ENCODE measurements at regions of chr20 and their contacts with region 1.

Region 1: DNA sequence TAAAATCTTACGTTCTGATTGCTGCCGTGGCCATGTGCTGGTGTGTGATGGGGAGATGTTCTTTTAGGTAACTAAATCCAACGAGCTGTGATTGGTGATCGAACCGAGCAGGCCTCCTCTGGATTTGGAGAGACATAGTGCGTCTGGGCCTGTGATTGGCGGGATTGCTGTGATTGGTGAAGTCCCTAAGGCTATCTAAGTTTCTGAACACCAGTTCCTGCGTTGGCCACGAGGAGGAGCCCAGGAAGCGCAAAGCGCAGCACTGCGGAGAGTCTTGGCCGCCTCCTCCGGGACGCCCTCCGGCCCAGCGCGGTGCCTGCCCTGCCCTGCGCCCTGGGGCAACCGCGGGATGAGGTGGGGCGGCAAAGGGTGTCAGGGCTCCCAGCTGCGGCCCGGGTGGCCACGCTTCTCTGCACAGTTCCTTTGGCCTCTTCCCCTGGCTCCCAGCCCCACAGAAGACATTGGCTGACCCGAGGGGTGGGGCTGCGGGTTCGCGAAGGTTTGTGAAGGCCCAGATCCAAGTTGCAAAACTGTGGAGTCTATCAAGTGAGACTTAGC is 33.0 kb downstream of the HNF4A start:
- DNase-seq: peak; percentile 87
- H3K4me3 Mint-ChIP-seq: no peak overlapping the region
- H3K27ac Mint-ChIP-seq: no peak overlapping the region
- H3K4me1 Mint-ChIP-seq: peaks cover 14% of the 10 kb centered on the region
- H3K27me3 Mint-ChIP-seq: no peaks in the 10 kb centered on the region
- CTCF ChIP-seq: peak; percentile 96

Region 2: DNA sequence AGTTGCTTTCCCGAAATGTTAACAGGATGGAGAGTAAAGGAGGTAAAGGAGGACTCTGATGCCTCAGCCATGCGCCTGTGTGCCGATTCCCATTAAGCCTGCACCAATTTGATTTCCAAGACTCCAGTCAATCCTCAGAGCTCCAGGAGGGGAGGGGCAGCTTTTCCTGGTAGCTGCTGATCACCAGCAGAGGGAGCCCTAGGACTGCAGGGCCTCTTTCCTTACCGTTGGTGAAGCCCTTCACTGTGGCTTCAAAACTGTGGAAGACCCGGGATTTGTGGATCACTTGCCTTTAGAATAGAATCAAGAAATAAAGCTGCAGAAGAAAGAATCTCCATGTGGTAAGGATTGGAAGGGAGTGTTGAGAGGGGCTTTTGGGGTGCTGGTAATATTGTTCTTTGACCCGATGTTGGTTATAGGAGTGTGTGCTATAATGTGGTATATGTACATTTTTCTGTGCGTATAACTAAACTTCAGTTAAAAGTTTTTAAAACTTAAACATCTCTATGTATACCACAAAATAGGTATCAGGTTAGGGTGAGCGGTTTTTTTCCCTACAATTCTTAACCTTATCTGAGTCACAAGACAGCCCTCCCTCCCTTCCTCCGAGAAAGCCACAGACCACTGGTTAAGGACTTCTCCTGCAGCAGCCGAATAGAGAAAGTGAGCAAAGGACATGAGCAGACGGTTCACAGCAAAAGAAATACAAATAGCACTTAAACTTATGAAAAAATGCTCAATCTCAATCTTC is 171.0 kb before region 1 on chr20:
- CTCF ChIA-PET with region 1: interaction called, 51 read pairs
- intact Hi-C with region 1: loop called (anchors 1 kb)
- DNase-seq: peak; percentile 91
- H3K4me3 Mint-ChIP-seq: no peak overlapping the region
- H3K27ac Mint-ChIP-seq: no peak overlapping the region
- H3K4me1 Mint-ChIP-seq: peaks cover 16% of the 10 kb centered on the region
- H3K27me3 Mint-ChIP-seq: no peaks in the 10 kb centered on the region
- CTCF ChIP-seq: peak; percentile 98

Region 3: DNA sequence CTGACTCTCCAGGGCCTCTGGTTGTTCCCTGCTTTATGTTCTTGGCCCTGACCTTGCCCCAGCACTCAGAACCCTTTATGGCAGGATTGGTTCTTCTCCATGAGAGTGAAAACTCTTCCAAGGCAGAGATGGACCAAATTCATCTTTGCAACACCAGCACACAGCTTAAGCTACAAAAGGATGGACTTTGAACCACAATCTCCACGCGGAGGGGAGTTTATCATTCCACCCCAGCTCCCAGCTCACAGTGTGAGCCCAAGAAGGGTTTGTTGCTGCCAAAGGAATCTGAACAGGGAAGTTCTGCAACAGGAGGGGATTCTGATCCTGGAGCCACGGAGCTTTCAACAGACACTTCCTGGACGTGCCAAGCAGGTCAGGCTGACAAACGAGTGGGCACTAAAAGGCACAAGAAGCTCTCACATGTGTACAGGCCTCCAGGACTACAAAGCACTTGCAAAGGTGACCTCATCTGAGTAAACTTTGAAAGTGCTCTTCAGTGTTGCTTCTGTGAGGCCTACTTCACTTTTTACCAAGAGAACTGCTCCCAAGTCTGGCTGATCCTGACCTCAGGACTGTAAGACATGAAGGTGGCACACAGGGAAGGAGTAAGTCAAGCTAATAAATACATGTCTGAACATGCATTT is 86.4 kb before region 1 on chr20:
- CTCF ChIA-PET with region 1: no interaction called
- intact Hi-C with region 1: loop called (anchors 5 kb)
- DNase-seq: no peak
- H3K4me3 Mint-ChIP-seq: no peak overlapping the region
- H3K27ac Mint-ChIP-seq: no peak overlapping the region
- H3K4me1 Mint-ChIP-seq: no peaks in the 10 kb centered on the region
- H3K27me3 Mint-ChIP-seq: no peaks in the 10 kb centered on the region
- CTCF ChIP-seq: no peak

Region 4: DNA sequence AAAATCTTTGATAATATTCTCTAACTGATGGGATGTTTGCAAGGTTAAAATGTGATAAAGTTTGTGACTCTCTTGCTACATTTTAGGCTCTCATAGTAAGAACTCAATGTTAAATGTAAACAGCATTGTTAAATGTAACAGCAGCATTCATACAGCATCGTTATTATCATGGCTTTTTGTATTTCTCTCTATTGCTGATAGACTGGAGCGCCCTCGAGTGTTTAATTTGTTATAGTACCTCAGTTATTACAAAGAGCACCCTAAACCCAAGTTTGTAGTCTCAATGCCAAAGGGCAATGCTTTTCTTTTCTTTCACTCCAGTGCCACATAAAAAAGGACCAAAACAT is 72.2 kb after region 1 on chr20:
- CTCF ChIA-PET with region 1: interaction called, 4 read pairs
- intact Hi-C with region 1: loop called (anchors 1 kb)
- DNase-seq: peak; percentile 40
- H3K4me3 Mint-ChIP-seq: no peak overlapping the region
- H3K27ac Mint-ChIP-seq: no peak overlapping the region
- H3K4me1 Mint-ChIP-seq: peaks cover 23% of the 10 kb centered on the region
- H3K27me3 Mint-ChIP-seq: no peaks in the 10 kb centered on the region
- CTCF ChIP-seq: peak; percentile 67

Region 5: GRCh38 chr20:44609511-44610312 is 221.2 kb after region 1 on chr20:
- CTCF ChIA-PET with region 1: interaction called, 4 read pairs
- intact Hi-C with region 1: loop called (anchors 1 kb)
- DNase-seq: peak; percentile 97
- H3K4me3 Mint-ChIP-seq: peak overlapping the region; percentile 52
- H3K27ac Mint-ChIP-seq: no peak overlapping the region
- H3K4me1 Mint-ChIP-seq: peaks cover 17% of the 10 kb centered on the region
- H3K27me3 Mint-ChIP-seq: no peaks in the 10 kb centered on the region
- CTCF ChIP-seq: peak; percentile 99

Measured in Calu3 (cell line).